ENCODE measurements at regions of chr13 and their contacts with region 1.

Region 1: GRCh38 chr13:48233046-48233907 is at the start of gene ITM2B:
- DNase-seq: peak; percentile 61 to 93 (median 83)

Region 2: DNA sequence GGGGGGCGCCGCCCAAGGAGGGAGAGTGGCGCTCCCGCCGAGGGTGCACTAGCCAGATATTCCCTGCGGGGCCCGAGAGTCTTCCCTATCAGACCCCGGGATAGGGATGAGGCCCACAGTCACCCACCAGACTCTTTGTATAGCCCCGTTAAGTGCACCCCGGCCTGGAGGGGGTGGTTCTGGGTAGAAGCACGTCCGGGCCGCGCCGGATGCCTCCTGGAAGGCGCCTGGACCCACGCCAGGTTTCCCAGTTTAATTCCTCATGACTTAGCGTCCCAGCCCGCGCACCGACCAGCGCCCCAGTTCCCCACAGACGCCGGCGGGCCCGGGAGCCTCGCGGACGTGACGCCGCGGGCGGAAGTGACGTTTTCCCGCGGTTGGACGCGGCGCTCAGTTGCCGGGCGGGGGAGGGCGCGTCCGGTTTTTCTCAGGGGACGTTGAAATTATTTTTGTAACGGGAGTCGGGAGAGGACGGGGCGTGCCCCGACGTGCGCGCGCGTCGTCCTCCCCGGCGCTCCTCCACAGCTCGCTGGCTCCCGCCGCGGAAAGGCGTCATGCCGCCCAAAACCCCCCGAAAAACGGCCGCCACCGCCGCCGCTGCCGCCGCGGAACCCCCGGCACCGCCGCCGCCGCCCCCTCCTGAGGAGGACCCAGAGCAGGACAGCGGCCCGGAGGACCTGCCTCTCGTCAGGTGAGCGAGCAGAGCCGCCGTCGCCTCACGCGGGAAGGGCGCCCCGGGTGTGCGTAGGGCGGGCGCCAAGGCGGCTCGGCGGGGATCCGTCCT is 70.3 kb after region 1 on chr13 and contains the start of gene RB1:
- intact Hi-C with region 1: loop called (anchors 5 kb)
- DNase-seq: peak; percentile 69 to 94 (median 88)

Measured in head of caudate nucleus (tissue), 42 donors.